K562 (cell line): ENCODE measurements at regions of chr5 and their contacts with region 1.

Region 1: DNA sequence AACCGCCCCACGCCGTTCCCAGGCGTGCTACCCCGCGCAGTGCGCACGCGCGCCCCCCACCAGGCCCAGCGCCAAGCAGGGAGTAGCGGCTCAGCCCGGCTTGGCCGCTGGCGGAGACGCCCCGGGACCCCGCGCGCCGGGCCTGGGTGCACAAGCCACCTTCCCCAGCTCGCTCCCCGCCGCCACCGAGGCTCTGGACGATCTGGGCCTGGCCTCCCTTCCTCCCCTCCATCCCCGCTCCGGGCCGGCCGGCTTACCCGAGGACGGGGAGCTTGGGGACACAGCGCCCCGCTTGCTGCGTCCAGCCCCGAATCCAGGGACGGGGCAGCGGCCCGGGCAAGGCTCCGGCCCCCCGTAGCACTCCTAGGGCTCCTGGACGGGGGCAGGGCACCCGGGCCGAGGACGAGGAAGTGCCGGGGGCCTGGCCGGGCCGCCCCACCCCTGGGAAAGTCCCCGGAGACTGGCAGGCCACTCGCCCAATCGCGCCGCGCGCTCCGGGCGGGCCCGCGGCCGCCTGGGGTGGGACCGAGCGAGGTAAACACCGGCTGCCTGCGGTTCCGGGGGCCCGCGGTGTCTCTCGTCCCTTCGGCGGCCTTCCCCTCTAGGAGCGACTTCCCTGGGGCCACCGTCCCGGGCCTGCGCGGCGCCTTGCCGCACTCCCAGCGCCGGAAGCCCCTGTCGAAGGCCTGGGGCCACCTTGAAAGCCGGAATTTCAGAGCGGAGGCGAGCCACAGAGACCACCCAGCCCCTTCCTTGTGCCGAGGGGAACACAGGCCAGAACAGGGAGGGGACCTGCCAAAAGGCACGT is at the start of gene TNIP1:
- DNase-seq: peak; percentile 95 to 100 (median 99)
- ATAC-seq: peak; percentile 98
- H3K4me3 ChIP-seq: peak within 1 kb of the TSS; percentile 92
- H3K27ac ChIP-seq: peak within 1 kb of the TSS; percentile 95
- H3K4me1 ChIP-seq: peaks cover 20 to 24% of the 10 kb centered on the region in 2 experiments; a peak in 4 of 5 replicates
- H3K27me3 ChIP-seq: no peaks in the 10 kb centered on the region
- CTCF ChIP-seq: no peak
- EP300 ChIP-seq: no peak
- POLR2A ChIP-seq: peak; percentile 82
- RAD21 ChIP-seq: no peak
- polyA plus RNA-seq, gene TNIP1: 0.46 to 0.99 TPM

Region 2: GRCh38 chr5:151068433-151069197 is 12.2 kb before region 1 on chr5:
- CTCF ChIA-PET with region 1: no interaction called
- POLR2A ChIA-PET with region 1: interaction called, 12 read pairs
- in situ Hi-C with region 1: no loop called
- intact Hi-C with region 1: no loop called
- DNase-seq: no peak
- ATAC-seq: no peak
- H3K4me3 ChIP-seq: no peak overlapping the region
- H3K27ac ChIP-seq: no peak overlapping the region
- H3K4me1 ChIP-seq: peaks cover 2 to 11% of the 10 kb centered on the region in 2 experiments; a peak in 4 of 5 replicates
- H3K27me3 ChIP-seq: no peaks in the 10 kb centered on the region; a peak in 1 of 5 replicates
- CTCF ChIP-seq: no peak
- EP300 ChIP-seq: no peak
- POLR2A ChIP-seq: no peak
- RAD21 ChIP-seq: no peak

Region 3: DNA sequence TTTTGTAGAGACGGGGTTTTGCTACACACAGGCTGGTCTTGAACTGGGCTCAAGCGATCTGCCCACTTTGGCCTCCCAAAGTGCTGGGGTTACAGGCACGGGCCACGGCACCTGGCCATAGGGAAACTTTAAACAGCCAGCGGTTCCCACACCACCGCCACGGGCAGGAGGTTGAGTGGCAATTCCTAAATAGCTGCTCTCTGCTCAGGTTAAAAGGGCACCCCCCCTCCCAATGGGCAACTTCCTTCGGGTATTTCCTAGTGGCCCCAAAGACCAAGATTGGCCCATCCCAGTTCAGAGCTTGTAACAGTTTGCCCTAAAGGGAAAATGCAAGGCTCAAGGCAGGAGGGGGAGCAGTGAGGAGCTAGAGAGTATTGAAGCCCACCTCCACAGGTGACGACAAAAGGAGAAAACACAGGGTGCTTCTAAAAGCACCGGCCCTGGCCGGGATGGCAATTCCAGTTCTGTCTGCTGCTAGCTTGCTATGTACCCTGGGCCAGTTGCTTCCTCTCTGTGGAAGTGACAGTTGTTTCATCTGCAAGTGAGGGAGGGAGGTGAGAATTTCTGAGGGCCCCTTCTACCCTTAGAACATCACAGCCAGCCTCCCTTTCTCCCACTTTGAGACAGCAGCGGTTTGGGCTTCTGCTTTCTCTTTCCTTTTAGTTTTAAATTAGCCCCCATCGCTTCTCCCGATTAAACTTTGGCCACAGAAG is 17.1 kb after region 1 on chr5:
- CTCF ChIA-PET with region 1: no interaction called
- POLR2A ChIA-PET with region 1: interaction called, 4 read pairs
- in situ Hi-C with region 1: no loop called
- intact Hi-C with region 1: loop called (anchors 1 kb)
- DNase-seq: no peak
- ATAC-seq: no peak
- H3K4me3 ChIP-seq: no peak overlapping the region
- H3K27ac ChIP-seq: no peak overlapping the region
- H3K4me1 ChIP-seq: peaks cover 44 to 74% of the 10 kb centered on the region in 2 experiments
- H3K27me3 ChIP-seq: no peaks in the 10 kb centered on the region
- CTCF ChIP-seq: no peak
- EP300 ChIP-seq: no peak
- POLR2A ChIP-seq: no peak
- RAD21 ChIP-seq: no peak

Region 4: GRCh38 chr5:151115274-151115905 is 34.6 kb after region 1 on chr5:
- CTCF ChIA-PET with region 1: no interaction called
- POLR2A ChIA-PET with region 1: interaction called, 3 read pairs
- in situ Hi-C with region 1: no loop called
- intact Hi-C with region 1: loop called (anchors 1 kb)
- DNase-seq: peak; percentile 76 to 84 (median 80)
- ATAC-seq: peak; percentile 80
- H3K4me3 ChIP-seq: no peak overlapping the region
- H3K27ac ChIP-seq: no peak overlapping the region
- H3K4me1 ChIP-seq: no peaks in the 10 kb centered on the region; a peak in 1 of 5 replicates
- H3K27me3 ChIP-seq: no peaks in the 10 kb centered on the region
- CTCF ChIP-seq: peak; percentile 95 to 97 (median 95)
- EP300 ChIP-seq: no peak
- POLR2A ChIP-seq: no peak
- RAD21 ChIP-seq: peak; percentile 99 to 100

Region 5: DNA sequence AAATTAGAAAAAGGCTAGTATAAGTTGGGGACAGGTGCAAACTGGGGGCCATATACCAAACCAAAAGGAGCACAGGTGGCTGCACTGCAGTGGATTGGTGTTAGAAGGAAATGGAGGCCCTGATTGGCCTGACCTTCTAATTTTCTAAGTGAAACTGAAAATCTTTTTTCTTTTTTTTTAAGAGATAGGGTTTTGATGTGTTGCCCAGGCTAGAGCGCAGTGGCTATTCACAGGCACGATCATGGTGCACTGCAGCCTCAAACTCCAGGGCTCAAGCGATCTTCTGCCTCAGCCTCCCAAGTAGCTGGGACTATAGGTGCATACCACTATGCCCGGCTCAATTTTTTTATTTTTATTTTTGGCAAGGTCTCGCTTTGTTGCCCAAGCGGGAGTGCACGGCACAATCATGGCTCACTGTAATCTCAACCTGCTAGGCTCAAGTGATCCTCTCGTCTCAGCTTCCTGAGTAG is 152.8 kb after region 1 on chr5:
- CTCF ChIA-PET with region 1: no interaction called
- POLR2A ChIA-PET with region 1: no interaction called
- in situ Hi-C with region 1: no loop called
- intact Hi-C with region 1: no loop called
- DNase-seq: no peak
- ATAC-seq: no peak
- H3K4me3 ChIP-seq: no peak overlapping the region
- H3K27ac ChIP-seq: no peak overlapping the region
- H3K4me1 ChIP-seq: peaks cover 0 to 6% of the 10 kb centered on the region in 2 experiments; a peak in 4 of 5 replicates
- H3K27me3 ChIP-seq: peaks cover 5 to 33% of the 10 kb centered on the region in 2 experiments
- CTCF ChIP-seq: no peak
- EP300 ChIP-seq: no peak
- POLR2A ChIP-seq: no peak
- RAD21 ChIP-seq: no peak